Mammary epithelial cell (primary cell): ENCODE measurements at regions of chr1 and their contacts with region 1.

Region 1: GRCh38 chr1:107359472-107360241 is 218.8 kb downstream of the NTNG1 start:
- DNase-seq: no peak
- H3K4me3 ChIP-seq: no peak overlapping the region
- H3K27ac ChIP-seq: no peak overlapping the region
- H3K4me1 ChIP-seq: no peaks in the 10 kb centered on the region
- H3K27me3 ChIP-seq: no peaks in the 10 kb centered on the region
- CTCF ChIP-seq: no peak

Region 2: GRCh38 chr1:107293901-107294613 is 65.6 kb before region 1 on chr1:
- CTCF ChIA-PET with region 1: interaction called, 29 read pairs
- dilution Hi-C with region 1: no loop called
- in situ Hi-C with region 1: no loop called
- intact Hi-C with region 1: no loop called
- DNase-seq: no peak
- H3K4me3 ChIP-seq: no peak overlapping the region
- H3K27ac ChIP-seq: no peak overlapping the region
- H3K4me1 ChIP-seq: no peaks in the 10 kb centered on the region
- H3K27me3 ChIP-seq: no peaks in the 10 kb centered on the region
- CTCF ChIP-seq: no peak

Region 3: GRCh38 chr1:107326824-107327445 is 32.7 kb before region 1 on chr1:
- CTCF ChIA-PET with region 1: no interaction called
- dilution Hi-C with region 1: no loop called
- in situ Hi-C with region 1: no loop called
- intact Hi-C with region 1: loop called (anchors 1 kb)
- DNase-seq: peak; percentile 9
- H3K4me3 ChIP-seq: no peak overlapping the region
- H3K27ac ChIP-seq: no peak overlapping the region
- H3K4me1 ChIP-seq: peaks cover 8% of the 10 kb centered on the region
- H3K27me3 ChIP-seq: no peaks in the 10 kb centered on the region
- CTCF ChIP-seq: no peak

Region 4: DNA sequence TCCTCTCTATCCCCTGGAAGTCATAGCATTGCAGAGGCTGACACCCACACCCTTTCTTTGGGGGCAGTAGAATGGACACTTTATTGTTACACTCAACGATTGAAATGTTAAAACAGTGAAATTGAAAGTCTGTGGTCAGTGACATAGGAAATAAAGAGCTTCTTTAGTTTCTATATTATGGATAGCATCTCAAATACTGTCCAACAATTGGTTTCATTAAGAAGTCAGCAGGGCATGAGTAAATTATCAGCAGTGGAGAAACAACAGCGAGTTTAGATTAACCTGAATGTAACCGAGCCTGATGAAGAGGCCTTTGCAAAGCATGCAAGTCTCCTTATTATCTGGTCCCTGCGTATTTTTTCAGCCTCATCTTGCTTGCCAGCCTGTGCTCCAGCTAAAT is 131.9 kb after region 1 on chr1:
- CTCF ChIA-PET with region 1: no interaction called
- dilution Hi-C with region 1: no loop called
- in situ Hi-C with region 1: no loop called
- intact Hi-C with region 1: no loop called
- DNase-seq: no peak
- H3K4me3 ChIP-seq: no peak overlapping the region
- H3K27ac ChIP-seq: no peak overlapping the region
- H3K4me1 ChIP-seq: no peaks in the 10 kb centered on the region
- H3K27me3 ChIP-seq: no peaks in the 10 kb centered on the region
- CTCF ChIP-seq: no peak